Gastrocnemius medialis (tissue), 4 donors: ENCODE measurements at regions of chr2 and their contacts with region 1.

Region 1: DNA sequence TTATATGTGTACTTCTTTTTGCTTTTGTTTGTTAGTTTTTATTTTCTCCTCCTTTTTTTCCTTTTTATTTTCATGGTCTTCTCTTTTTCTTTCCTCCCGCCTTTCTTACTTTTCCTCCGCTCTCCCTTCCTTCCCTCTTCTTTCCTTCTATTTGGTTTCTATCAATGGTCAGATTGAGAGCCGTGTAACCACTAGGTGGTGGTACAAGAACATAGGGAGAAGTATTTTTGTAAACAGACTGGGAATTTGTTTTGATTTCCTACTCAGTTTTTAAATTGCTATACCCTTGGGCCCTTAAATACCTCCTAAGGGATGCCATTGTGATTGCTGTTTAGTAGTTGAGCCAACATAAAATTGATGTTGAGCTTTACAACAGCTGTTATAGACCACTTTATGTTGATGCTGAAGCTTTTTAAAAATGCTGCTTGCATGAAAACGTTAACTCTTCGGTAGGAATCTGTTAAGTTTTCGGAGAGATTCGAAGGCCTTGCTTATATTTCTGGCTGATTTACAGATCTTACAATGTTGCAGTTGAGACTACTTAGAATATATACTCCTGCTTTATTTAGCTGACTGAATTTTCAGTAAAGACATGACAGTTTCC is 124.2 kb downstream of the UBE2E3 start:
- DNase-seq: no peak
- ATAC-seq: no peak
- H3K4me3 ChIP-seq: no peak overlapping the region
- H3K27ac ChIP-seq: no peak overlapping the region
- H3K4me1 ChIP-seq: no peaks in the 10 kb centered on the region
- H3K27me3 ChIP-seq: no peaks in the 10 kb centered on the region
- CTCF ChIP-seq: peak in 4 of 5 experiments; percentile 9 to 47 (median 26)
- POLR2A ChIP-seq: no peak

Region 2: GRCh38 chr2:181123798-181124231 is 19.2 kb after region 1 on chr2:
- in situ Hi-C with region 1: no loop called
- intact Hi-C with region 1: no loop called
- DNase-seq: no peak
- ATAC-seq: no peak
- H3K4me3 ChIP-seq: no peak overlapping the region
- H3K27ac ChIP-seq: no peak overlapping the region
- H3K4me1 ChIP-seq: no peaks in the 10 kb centered on the region
- H3K27me3 ChIP-seq: no peaks in the 10 kb centered on the region
- CTCF ChIP-seq: no peak
- POLR2A ChIP-seq: no peak

Region 3: DNA sequence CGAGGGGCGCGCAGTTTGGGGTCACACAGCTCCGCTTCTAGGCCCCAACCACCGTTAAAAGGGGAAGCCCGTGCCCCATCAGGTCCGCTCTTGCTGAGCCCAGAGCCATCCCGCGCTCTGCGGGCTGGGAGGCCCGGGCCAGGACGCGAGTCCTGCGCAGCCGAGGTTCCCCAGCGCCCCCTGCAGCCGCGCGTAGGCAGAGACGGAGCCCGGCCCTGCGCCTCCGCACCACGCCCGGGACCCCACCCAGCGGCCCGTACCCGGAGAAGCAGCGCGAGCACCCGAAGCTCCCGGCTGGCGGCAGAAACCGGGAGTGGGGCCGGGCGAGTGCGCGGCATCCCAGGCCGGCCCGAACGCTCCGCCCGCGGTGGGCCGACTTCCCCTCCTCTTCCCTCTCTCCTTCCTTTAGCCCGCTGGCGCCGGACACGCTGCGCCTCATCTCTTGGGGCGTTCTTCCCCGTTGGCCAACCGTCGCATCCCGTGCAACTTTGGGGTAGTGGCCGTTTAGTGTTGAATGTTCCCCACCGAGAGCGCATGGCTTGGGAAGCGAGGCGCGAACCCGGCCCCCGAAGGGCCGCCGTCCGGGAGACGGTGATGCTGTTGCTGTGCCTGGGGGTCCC is 352.6 kb after region 1 on chr2 and contains the start of gene ITGA4:
- in situ Hi-C with region 1: loop called in 3 of 4 experiments (anchors 25 kb)
- intact Hi-C with region 1: no loop called
- DNase-seq: peak; percentile 2 to 17
- ATAC-seq: no peak
- H3K4me3 ChIP-seq: peak within 1 kb of the TSS; percentile 30 to 52 (median 46)
- H3K27ac ChIP-seq: no peak within 1 kb of the TSS
- H3K4me1 ChIP-seq: no peaks in the 10 kb centered on the region
- H3K27me3 ChIP-seq: peaks cover 15 to 25% (median 19%) of the 10 kb centered on the region in 3 donors
- CTCF ChIP-seq: peak in 1 of 5 experiments; percentile 22
- POLR2A ChIP-seq: no peak
- total RNA-seq, gene ITGA4: 0.47 to 0.61 (median 0.55) TPM in 3 of 4 donors, not detected in the other

Region 4: GRCh38 chr2:181483876-181484275 is 379.3 kb after region 1 on chr2:
- in situ Hi-C with region 1: no loop called
- intact Hi-C with region 1: no loop called
- DNase-seq: no peak
- ATAC-seq: no peak
- H3K4me3 ChIP-seq: no peak overlapping the region
- H3K27ac ChIP-seq: no peak overlapping the region
- H3K4me1 ChIP-seq: no peaks in the 10 kb centered on the region
- H3K27me3 ChIP-seq: no peaks in the 10 kb centered on the region
- CTCF ChIP-seq: no peak
- POLR2A ChIP-seq: no peak

Region 5: DNA sequence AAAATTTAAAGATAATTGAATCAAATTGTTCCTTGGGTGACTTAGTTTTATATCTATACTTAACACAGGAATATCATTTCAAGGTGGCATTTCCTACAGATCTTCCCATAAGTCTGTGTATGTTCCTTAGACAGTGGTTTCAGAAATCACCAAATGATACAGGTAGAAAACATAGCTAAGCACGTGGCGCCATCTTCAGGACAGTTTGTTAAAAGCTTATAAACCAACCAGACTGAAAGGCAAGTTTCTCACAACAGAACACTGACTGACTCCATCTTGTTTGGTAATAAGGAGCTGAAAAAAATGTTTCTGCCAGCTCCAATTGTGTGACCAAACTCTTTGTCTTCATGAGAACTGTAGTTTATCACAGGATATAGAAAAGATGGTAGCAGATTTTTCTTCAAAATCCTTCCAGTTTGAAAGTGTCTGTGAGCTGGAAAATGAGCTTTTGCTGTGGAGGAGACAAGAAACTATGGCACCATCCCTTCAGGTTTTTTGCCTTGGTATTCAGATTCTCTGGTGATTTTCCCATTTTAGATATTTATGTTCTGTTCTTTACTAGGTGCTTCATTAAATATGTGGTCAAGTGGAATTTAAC is 610.5 kb after region 1 on chr2:
- in situ Hi-C with region 1: loop called in 3 of 4 experiments (anchors 25 kb)
- intact Hi-C with region 1: loop called (anchors 10 kb)
- DNase-seq: peak; percentile 3 to 15
- ATAC-seq: peak in 1 of 2 donors; percentile 65
- H3K4me3 ChIP-seq: no peak overlapping the region
- H3K27ac ChIP-seq: no peak overlapping the region
- H3K4me1 ChIP-seq: no peaks in the 10 kb centered on the region
- H3K27me3 ChIP-seq: no peaks in the 10 kb centered on the region
- CTCF ChIP-seq: peak in 3 of 5 experiments; percentile 25 to 54 (median 48)
- POLR2A ChIP-seq: no peak